ENCODE measurements at regions of chr22 and their contacts with region 1.

Region 1: GRCh38 chr22:30289134-30289979 is at the start of gene CASTOR1:
- DNase-seq: peak; percentile 94 to 99 (median 98)
- ATAC-seq: peak; percentile 87
- H3K4me3 ChIP-seq: peak within 1 kb of the TSS; percentile 59
- H3K4me1 ChIP-seq: peaks cover 20% of the 10 kb centered on the region
- CTCF ChIP-seq: no peak
- total RNA-seq, gene CASTOR1: 6.1 to 8.4 (median 7.6) TPM

Region 2: DNA sequence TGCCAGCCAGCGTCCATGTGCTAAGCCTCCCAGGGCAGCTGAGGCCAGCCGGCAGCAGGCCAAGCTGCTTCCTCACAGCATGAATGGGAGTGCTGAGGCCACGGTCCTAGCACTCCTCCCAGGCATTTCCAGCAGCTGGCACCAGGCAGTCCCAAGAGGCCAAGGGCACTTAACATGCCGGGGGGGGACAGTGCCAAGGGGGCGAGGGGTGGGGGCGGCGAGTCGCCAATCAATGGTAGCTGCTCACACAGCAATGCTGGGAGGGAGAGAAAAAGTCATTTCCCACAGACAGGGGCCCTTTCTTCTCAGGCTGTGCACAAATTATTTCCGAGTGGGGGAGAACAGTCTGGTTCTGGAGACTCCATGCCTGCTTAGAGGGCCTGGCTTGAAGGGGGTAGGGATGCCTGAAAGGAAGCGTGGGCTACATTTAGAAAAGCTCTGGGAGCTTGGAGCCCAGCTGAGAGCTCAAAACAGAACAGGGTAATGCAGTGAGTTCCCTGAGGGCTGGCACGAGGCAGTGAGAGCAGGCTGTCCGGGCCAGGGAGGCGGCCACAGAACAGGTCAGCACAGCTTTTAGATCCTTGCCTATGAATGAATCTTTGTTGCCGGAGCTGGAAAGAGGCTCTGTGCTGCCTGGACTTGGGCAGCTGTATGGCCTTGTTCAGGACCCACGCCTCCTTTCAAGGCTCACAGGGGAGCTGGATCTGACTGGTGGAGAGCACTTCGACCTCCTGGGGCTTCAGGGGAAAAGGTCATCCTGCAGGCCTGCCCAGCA is 51.7 kb after region 1 on chr22:
- intact Hi-C with region 1: loop called in 1 of 2 experiments (anchors 10 kb)
- DNase-seq: no peak
- ATAC-seq: peak; percentile 8
- H3K4me3 ChIP-seq: no peak overlapping the region
- H3K4me1 ChIP-seq: no peaks in the 10 kb centered on the region
- CTCF ChIP-seq: no peak

Measured in mucosa of descending colon (tissue), 3 donors.